Gastrocnemius medialis (tissue), 4 donors: ENCODE measurements at regions of chr6 and their contacts with region 1.

Region 1: DNA sequence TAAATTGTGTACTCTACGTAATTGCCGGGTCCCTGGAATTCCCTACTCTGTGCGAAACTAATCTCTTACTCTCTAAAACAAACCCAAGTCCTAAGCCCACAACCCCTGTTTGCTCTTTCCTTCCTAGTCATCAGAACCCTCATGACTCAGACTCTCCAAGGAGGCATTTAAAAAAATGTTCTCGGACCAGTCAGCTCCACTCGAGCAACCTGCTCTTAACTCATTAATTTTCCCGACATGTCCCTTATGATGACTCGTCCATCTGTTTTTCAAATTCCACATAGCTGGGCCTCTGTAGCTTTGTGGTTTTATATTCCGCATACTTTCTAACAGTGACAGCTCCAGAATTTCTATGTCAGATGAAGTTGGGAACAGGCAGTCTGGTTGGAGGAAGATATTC is 2.6 kb upstream of the MUC22 start:
- DNase-seq: no peak
- ATAC-seq: peak; percentile 32 to 35
- H3K4me3 ChIP-seq: no peak overlapping the region
- H3K27ac ChIP-seq: peak overlapping the region; percentile 64 to 91 (median 79)
- H3K4me1 ChIP-seq: peaks cover 6 to 41% of the 10 kb centered on the region in 2 donors
- H3K27me3 ChIP-seq: no peaks in the 10 kb centered on the region
- CTCF ChIP-seq: no peak
- POLR2A ChIP-seq: no peak

Region 2: GRCh38 chr6:30926644-30927043 is 81.0 kb before region 1 on chr6:
- in situ Hi-C with region 1: no loop called
- intact Hi-C with region 1: loop called (anchors 2 kb)
- DNase-seq: peak; percentile 80 to 94
- ATAC-seq: peak; percentile 95 to 99
- H3K4me3 ChIP-seq: no peak overlapping the region
- H3K27ac ChIP-seq: peak overlapping the region; percentile 65 to 90 (median 79)
- H3K4me1 ChIP-seq: peaks cover 8 to 20% of the 10 kb centered on the region in 2 donors
- H3K27me3 ChIP-seq: no peaks in the 10 kb centered on the region
- CTCF ChIP-seq: no peak
- POLR2A ChIP-seq: no peak

Region 3: DNA sequence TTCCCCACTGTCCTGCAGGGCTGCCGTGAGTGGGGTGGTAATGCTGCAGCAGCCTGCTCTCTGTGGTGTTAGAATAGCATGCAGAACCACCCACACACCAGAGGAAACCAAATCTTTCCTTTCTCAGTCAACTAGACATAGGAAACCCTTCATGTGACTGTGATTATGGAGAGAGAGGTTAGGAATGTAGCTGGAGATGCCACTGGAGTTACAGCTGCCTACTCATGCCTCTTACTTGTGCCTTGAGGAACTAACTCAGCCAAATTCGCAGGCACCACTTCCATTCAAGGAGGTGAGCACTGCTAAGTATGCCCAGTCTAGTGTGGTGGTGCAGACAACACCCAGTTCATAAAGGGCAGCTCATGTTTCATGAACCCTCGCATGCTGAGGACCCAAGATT is 30.0 kb after region 1 on chr6:
- in situ Hi-C with region 1: no loop called
- intact Hi-C with region 1: loop called (anchors 2 kb)
- DNase-seq: peak; percentile 12 to 55
- ATAC-seq: peak; percentile 86 to 91
- H3K4me3 ChIP-seq: no peak overlapping the region
- H3K27ac ChIP-seq: peak overlapping the region; percentile 49 to 81 (median 70)
- H3K4me1 ChIP-seq: peaks cover 20 to 25% of the 10 kb centered on the region in 2 donors
- H3K27me3 ChIP-seq: no peaks in the 10 kb centered on the region
- CTCF ChIP-seq: no peak
- POLR2A ChIP-seq: no peak